ENCODE measurements at regions of chr15 and their contacts with region 1.

Region 1: GRCh38 chr15:73414876-73415275 is 28.1 kb upstream of the REC114 start:
- DNase-seq: no peak
- H3K4me3 ChIP-seq: no peak overlapping the region
- H3K27ac ChIP-seq: no peak overlapping the region
- H3K4me1 ChIP-seq: no peaks in the 10 kb centered on the region
- H3K27me3 ChIP-seq: peaks cover 18% of the 10 kb centered on the region
- CTCF ChIP-seq: no peak

Region 2: GRCh38 chr15:73176598-73176997 is 238.3 kb before region 1 on chr15:
- CTCF ChIA-PET with region 1: no interaction called
- POLR2A ChIA-PET with region 1: no interaction called
- intact Hi-C with region 1: no loop called
- DNase-seq: no peak
- H3K4me3 ChIP-seq: no peak overlapping the region
- H3K27ac ChIP-seq: no peak overlapping the region
- H3K4me1 ChIP-seq: peaks cover 8% of the 10 kb centered on the region
- H3K27me3 ChIP-seq: no peaks in the 10 kb centered on the region
- CTCF ChIP-seq: no peak

Region 3: GRCh38 chr15:73495171-73495570 is 80.3 kb after region 1 on chr15:
- CTCF ChIA-PET with region 1: no interaction called
- POLR2A ChIA-PET with region 1: interaction called, 10 read pairs
- intact Hi-C with region 1: no loop called
- DNase-seq: no peak
- H3K4me3 ChIP-seq: no peak overlapping the region
- H3K27ac ChIP-seq: no peak overlapping the region
- H3K4me1 ChIP-seq: no peaks in the 10 kb centered on the region
- H3K27me3 ChIP-seq: peaks cover 67% of the 10 kb centered on the region
- CTCF ChIP-seq: no peak

Measured in A673 (cell line).